Activated T-helper 1 cell treated with anti-CD3 and anti-CD28 coated beads, Interleukin-12 subunit alpha, Interleukin-12 subunit beta, Interleukin-2, Interleukin-4 antibody, amounts not matched to agents 30 ng/mL and 10 ng/mL and 1 ng/mL, durations not matched to agents 14 hours and 24 hours and 36 hours (primary cell): ENCODE measurements at regions of chr16 and their contacts with region 1.

Region 1: GRCh38 chr16:50665128-50665878 is 15.8 kb downstream of the SNX20 start:
- DNase-seq: peak; percentile 76
- H3K4me3 Mint-ChIP-seq: peak overlapping the region; percentile 66
- H3K27ac Mint-ChIP-seq: peak overlapping the region; percentile 68
- H3K4me1 Mint-ChIP-seq: peaks cover 43% of the 10 kb centered on the region
- H3K27me3 Mint-ChIP-seq: no peaks in the 10 kb centered on the region

Region 2: GRCh38 chr16:50024684-50025536 is 640.4 kb before region 1 on chr16 and contains the start of gene CNEP1R1:
- intact Hi-C with region 1: loop called (anchors 2 kb)
- DNase-seq: peak; percentile 92
- H3K4me3 Mint-ChIP-seq: peak within 1 kb of the TSS; percentile 96
- H3K27ac Mint-ChIP-seq: peak within 1 kb of the TSS; percentile 84
- H3K4me1 Mint-ChIP-seq: peaks cover 26% of the 10 kb centered on the region
- H3K27me3 Mint-ChIP-seq: peaks cover 11% of the 10 kb centered on the region
- total RNA-seq, gene CNEP1R1: 21.9 and 22.7 TPM in 2 replicates

Region 3: GRCh38 chr16:50326949-50327402 is 338.3 kb before region 1 on chr16:
- intact Hi-C with region 1: loop called (anchors 2 kb)
- DNase-seq: peak; percentile 68
- H3K4me3 Mint-ChIP-seq: no peak overlapping the region
- H3K27ac Mint-ChIP-seq: no peak overlapping the region
- H3K4me1 Mint-ChIP-seq: peaks cover 45% of the 10 kb centered on the region
- H3K27me3 Mint-ChIP-seq: no peaks in the 10 kb centered on the region

Region 4: DNA sequence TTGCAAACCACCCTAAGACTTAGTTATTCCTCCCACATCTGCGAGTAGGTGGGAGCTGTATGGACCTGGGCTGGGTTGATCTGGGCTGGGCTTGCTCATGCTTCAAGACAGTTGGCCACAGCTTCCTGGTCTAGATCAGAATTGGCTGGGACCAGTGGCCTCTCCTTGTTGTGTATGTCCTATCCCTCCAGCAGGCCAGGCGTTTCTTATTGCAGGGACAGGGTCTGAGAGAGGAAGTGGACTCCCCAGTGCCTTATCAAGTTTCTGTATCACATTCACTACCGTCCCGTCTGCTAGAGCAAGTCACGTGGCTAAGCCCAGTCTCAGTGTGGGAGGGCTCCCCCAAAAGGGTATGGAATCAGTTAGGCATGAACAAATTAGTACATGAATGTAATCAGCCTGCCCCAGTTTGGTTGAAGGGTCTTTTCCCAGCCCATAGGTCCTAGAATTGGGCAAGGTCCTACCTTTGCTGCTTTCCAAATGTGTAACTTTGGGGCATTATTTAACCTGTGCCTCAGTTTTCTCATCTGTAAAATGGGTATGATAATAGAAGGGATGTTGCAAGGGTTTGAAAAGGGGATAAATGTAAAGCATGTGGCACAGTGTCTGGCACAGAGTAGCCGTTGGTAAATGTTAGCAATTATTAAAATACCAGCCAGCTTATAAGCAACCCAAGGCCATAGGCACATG is 81.1 kb before region 1 on chr16:
- intact Hi-C with region 1: loop called (anchors 2 kb)
- DNase-seq: no peak
- H3K4me3 Mint-ChIP-seq: no peak overlapping the region
- H3K27ac Mint-ChIP-seq: no peak overlapping the region
- H3K4me1 Mint-ChIP-seq: peaks cover 12% of the 10 kb centered on the region
- H3K27me3 Mint-ChIP-seq: peaks cover 2% of the 10 kb centered on the region

Region 5: GRCh38 chr16:50741808-50742575 is 76.7 kb after region 1 on chr16 and contains the start of gene CYLD:
- intact Hi-C with region 1: loop called (anchors 1 kb)
- DNase-seq: peak; percentile 100
- H3K4me3 Mint-ChIP-seq: peak within 1 kb of the TSS; percentile 86
- H3K27ac Mint-ChIP-seq: peak within 1 kb of the TSS; percentile 93
- H3K4me1 Mint-ChIP-seq: peaks cover 64% of the 10 kb centered on the region
- H3K27me3 Mint-ChIP-seq: no peaks in the 10 kb centered on the region
- total RNA-seq, gene CYLD: 219 and 223 TPM in 2 replicates

Region 6: DNA sequence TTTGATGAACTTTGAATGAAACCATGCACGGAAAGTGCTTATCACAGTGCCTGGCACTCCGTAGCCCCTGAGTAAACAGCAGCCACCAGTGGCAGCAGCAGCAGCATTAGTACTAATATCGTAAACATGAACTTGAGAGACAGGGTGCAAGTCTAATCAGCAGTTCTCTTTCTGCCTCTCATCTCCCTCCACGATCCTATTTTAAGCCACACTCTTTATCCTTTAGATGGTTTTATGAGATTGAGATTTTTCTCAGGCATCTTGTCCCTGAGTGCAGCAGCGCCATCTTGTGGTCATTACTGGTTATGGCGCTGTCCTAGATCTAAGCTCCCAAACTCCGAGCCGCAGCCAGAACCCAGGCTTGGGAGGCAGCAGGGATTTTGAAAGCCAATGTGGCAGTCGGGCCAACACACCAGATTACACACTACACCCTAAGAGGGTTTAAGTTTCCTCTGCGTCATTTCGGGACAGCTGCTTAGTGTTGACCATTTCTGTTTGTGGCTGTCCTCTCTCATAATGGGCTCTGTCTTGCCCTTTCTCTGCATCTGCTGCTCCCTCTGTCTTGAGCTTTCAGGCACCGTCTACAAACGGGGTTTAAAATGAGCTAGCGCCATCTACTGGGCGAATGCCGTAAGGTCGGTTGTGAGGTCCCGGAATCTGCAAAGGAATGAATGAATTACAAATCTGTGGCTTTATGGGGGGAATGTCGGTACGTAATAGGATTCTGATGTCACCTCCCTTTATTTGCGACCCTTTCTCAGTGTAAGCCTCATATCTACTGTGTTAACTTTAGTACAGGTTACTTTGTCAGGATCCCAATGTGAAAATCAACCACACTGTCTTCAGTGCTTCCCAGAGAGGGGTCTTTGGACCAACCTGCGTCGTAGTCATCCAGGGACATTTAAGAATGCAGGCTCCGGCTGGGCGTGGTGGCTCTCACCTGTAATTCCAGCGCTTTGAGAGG is 141.1 kb after region 1 on chr16:
- intact Hi-C with region 1: loop called (anchors 1 kb)
- DNase-seq: peak; percentile 78
- H3K4me3 Mint-ChIP-seq: peak overlapping the region; percentile 66
- H3K27ac Mint-ChIP-seq: peak overlapping the region; percentile 30
- H3K4me1 Mint-ChIP-seq: peaks cover 9% of the 10 kb centered on the region
- H3K27me3 Mint-ChIP-seq: no peaks in the 10 kb centered on the region